IMR-90 (cell line): ENCODE measurements at regions of chr20 and their contacts with region 1.

Region 1: DNA sequence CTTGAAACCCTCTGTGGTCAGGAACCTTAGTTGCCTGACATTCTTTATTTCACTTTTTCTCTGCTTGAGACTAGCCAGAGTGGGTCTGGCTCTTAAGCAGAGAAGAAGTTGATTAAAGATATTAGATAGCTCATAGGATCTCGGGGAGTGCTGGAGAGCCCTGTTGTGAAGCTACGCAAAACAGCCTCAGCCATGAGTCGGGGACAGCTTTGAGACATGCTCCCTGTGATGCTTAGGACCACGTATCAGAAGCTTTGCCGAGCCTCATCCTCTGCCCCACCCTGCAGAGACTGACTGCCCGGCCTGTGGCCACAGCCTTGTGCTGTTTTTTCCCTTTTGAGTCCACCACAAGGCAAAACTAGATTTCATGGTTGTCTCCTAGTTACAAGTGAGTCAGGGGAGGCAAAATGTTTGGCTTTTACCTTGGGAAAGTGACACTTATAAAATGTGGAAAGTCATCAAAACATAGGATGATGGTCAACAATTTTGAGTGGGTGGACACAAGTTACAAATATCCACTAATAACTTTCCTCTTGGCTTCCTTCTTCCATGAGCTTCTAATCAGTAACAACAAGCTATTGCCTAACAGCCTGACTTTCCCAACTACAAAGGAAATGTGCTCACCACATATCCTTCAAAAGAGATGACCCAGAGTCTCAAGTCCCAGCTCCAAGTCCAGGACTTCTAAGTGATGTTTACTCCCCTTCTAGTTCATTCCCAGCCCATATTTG is 108.4 kb downstream of the JAG1 start:
- DNase-seq: peak; percentile 89
- ATAC-seq: peak; percentile 81
- H3K4me3 ChIP-seq: no peak overlapping the region
- H3K27ac ChIP-seq: peak overlapping the region; percentile 3; the same call in 1 of the 2 replicates
- H3K4me1 ChIP-seq: peaks cover 4% of the 10 kb centered on the region
- H3K27me3 ChIP-seq: no peaks in the 10 kb centered on the region
- CTCF ChIP-seq: no peak
- POLR2A ChIP-seq: no peak
- RAD21 ChIP-seq: no peak

Region 2: DNA sequence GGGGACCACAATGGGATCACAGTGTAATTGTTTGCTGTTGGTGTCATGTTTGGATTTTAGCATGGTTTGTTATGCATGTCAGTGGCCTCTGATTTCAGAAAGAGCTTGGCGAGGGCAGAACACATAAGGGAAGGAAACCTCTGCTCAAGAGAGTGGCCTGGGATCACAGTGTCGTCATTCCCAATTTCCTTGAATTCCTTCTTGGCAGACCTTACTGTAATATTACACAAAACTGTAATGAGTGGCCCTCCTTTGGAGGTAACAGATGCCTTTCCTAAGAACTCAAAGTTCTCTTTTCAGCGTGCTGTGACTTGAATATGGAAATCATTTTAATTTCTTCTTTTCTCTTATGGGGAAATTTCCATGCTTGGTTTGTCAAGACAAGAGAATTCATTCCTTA is 61.5 kb after region 1 on chr20:
- CTCF ChIA-PET with region 1: no interaction called
- POLR2A ChIA-PET with region 1: no interaction called
- dilution Hi-C with region 1: no loop called
- in situ Hi-C with region 1: no loop called
- intact Hi-C with region 1: loop called (anchors 5 kb)
- DNase-seq: no peak
- ATAC-seq: no peak
- H3K4me3 ChIP-seq: no peak overlapping the region
- H3K27ac ChIP-seq: no peak overlapping the region
- H3K4me1 ChIP-seq: peaks cover 12% of the 10 kb centered on the region
- H3K27me3 ChIP-seq: no peaks in the 10 kb centered on the region
- CTCF ChIP-seq: no peak
- POLR2A ChIP-seq: no peak
- RAD21 ChIP-seq: no peak

Region 3: GRCh38 chr20:10647465-10647864 is 82.1 kb after region 1 on chr20:
- CTCF ChIA-PET with region 1: no interaction called
- POLR2A ChIA-PET with region 1: no interaction called
- dilution Hi-C with region 1: no loop called
- in situ Hi-C with region 1: loop called (anchors 5 kb)
- intact Hi-C with region 1: no loop called
- DNase-seq: no peak
- ATAC-seq: no peak
- H3K4me3 ChIP-seq: no peak overlapping the region
- H3K27ac ChIP-seq: no peak overlapping the region
- H3K4me1 ChIP-seq: peaks cover 27% of the 10 kb centered on the region
- H3K27me3 ChIP-seq: no peaks in the 10 kb centered on the region
- CTCF ChIP-seq: no peak
- POLR2A ChIP-seq: no peak
- RAD21 ChIP-seq: peak; percentile 8; the same call in 1 of the 2 replicates